ENCODE measurements at regions of chr9 and their contacts with region 1.

Region 1: GRCh38 chr9:133023117-133023890 is 7.5 kb upstream of the GTF3C5 start:
- DNase-seq: peak; percentile 89
- H3K4me3 Mint-ChIP-seq: peak overlapping the region; percentile 56
- H3K27ac Mint-ChIP-seq: peak overlapping the region; percentile 45
- H3K4me1 Mint-ChIP-seq: peaks cover 17% of the 10 kb centered on the region
- H3K27me3 Mint-ChIP-seq: peaks cover 4% of the 10 kb centered on the region

Region 2: GRCh38 chr9:132944302-132945185 is 78.8 kb before region 1 on chr9 and contains the start of gene TSC1:
- intact Hi-C with region 1: loop called (anchors 2 kb)
- DNase-seq: peak; percentile 98
- H3K4me3 Mint-ChIP-seq: peak within 1 kb of the TSS; percentile 96
- H3K27ac Mint-ChIP-seq: peak within 1 kb of the TSS; percentile 100
- H3K4me1 Mint-ChIP-seq: peaks cover 16% of the 10 kb centered on the region
- H3K27me3 Mint-ChIP-seq: peaks cover 2% of the 10 kb centered on the region
- total RNA-seq, gene TSC1: 27.9 and 33.5 TPM in 2 replicates

Region 3: GRCh38 chr9:132994410-132995120 is 28.7 kb before region 1 on chr9:
- intact Hi-C with region 1: no loop called
- DNase-seq: no peak
- H3K4me3 Mint-ChIP-seq: no peak overlapping the region
- H3K27ac Mint-ChIP-seq: no peak overlapping the region
- H3K4me1 Mint-ChIP-seq: peaks cover 3% of the 10 kb centered on the region
- H3K27me3 Mint-ChIP-seq: peaks cover 22% of the 10 kb centered on the region

Region 4: GRCh38 chr9:133356391-133357091 is 333.2 kb after region 1 on chr9 and contains the starts of genes SURF1 and SURF2:
- intact Hi-C with region 1: loop called (anchors 10 kb)
- DNase-seq: peak; percentile 97
- H3K4me3 Mint-ChIP-seq: peak within 1 kb of the TSS; percentile 92
- H3K27ac Mint-ChIP-seq: peak within 1 kb of the TSS; percentile 84
- H3K4me1 Mint-ChIP-seq: peaks cover 42% of the 10 kb centered on the region
- H3K27me3 Mint-ChIP-seq: no peaks in the 10 kb centered on the region
- total RNA-seq, gene SURF1: 29.8 and 33.2 TPM in 2 replicates
- total RNA-seq, gene SURF2: 28.5 and 29.3 TPM in 2 replicates

Region 5: DNA sequence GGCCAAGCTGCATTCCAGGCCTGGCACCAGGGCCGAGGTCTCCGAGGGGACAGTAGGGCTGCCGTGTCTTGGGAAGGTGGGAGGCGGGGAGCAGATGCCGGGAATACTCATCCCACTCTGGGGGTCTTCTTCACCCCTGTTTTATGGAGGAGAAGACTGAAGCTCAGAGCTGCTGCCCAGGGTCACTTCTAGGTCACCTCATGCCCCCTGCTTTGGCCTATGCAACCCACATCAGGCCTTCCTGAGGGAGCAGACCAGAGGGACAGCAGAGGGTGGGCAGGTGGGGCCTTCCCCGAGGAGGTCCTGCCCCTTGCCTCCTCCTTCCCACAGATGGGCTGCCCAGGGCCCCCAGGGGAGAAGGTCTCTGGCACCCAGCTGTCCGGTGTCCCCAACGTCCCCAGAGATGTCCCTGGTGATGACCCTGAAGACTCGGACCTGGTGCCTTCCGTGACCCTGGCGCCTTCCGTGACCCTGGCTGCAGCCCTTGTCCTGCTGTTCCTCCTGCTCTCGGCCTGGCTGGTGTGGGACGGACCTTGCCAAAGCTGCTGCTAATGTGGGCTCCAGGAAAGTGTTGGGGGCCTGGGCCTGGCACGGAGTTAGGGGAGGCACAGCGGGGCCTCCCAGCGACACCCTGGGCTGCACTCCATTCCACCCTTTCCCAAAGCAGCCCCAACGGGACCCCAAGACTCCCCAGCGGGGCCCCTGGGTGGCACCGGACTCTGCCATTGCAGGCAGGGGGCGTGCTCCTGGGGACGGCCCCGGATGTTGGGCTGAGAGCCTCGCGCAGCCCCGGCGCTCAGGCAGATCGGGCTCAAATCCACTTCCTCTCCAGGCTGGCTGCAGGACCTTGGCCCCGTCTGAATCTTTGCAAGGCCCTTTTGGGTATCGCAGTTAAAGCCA is 462.3 kb after region 1 on chr9:
- intact Hi-C with region 1: loop called (anchors 1 kb)
- DNase-seq: no peak
- H3K4me3 Mint-ChIP-seq: peak overlapping the region; percentile 23
- H3K27ac Mint-ChIP-seq: no peak overlapping the region
- H3K4me1 Mint-ChIP-seq: no peaks in the 10 kb centered on the region
- H3K27me3 Mint-ChIP-seq: peaks cover 13% of the 10 kb centered on the region

Measured in activated CD4-positive, alpha-beta T cell treated with anti-CD3 and anti-CD28 coated beads, Interleukin-2, amount 10 ng/mL, durations not matched to agents 24 days and 14 days (primary cell).